CD4-positive, alpha-beta memory T cell (primary cell): ENCODE measurements at regions of chr6 and their contacts with region 1.

Region 1: GRCh38 chr6:25490018-25490801 is 161.8 kb upstream of the SCGN start:
- DNase-seq: peak; percentile 60 to 68 (median 63)
- H3K4me3 ChIP-seq: no peak overlapping the region
- H3K4me3 Mint-ChIP-seq: no peak overlapping the region
- H3K27ac ChIP-seq: no peak overlapping the region
- H3K27ac Mint-ChIP-seq: peak overlapping the region in 2 of 7 donors; percentile 62 to 79
- H3K4me1 ChIP-seq: no peaks in the 10 kb centered on the region
- H3K4me1 Mint-ChIP-seq: peaks cover 0 to 9% (median 3%) of the 10 kb centered on the region in 4 donors
- H3K27me3 ChIP-seq: no peaks in the 10 kb centered on the region
- H3K27me3 Mint-ChIP-seq: no peaks in the 10 kb centered on the region

Region 2: DNA sequence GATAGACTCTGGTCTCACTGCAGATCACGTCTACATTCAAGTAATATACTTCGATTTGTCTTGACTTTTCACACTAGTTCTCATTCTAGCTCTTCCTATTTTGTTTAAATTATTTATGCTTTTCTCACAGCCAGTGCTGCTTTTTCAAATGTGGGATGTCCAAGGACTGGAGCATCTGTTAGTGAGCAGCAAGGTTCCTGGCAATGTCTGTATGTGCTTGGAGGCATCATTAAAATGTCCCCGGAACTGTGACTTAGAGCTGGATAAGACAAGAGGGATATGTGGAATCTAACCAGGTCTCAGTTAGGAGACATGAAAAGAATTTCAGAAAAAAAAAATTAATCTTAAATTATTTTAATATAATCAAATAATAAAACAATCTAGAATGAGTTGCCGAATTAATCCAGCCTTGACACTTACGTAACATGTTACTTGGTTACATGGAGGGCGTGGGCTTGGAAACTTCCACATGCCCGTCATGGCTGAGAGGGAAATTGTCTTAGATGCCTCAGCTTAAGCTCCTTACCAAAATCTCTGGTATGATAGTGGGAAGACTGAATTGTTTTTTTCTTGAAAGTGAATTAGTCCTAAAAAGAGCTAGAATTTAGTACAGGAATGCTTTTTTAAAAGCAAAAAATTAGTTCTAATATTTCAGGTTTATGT is 232.4 kb before region 1 on chr6:
- CTCF ChIA-PET with region 1: interaction called, 202 read pairs
- POLR2A ChIA-PET with region 1: no interaction called
- intact Hi-C with region 1: no loop called
- DNase-seq: no peak
- H3K4me3 ChIP-seq: no peak overlapping the region
- H3K4me3 Mint-ChIP-seq: no peak overlapping the region
- H3K27ac ChIP-seq: no peak overlapping the region
- H3K27ac Mint-ChIP-seq: no peak overlapping the region
- H3K4me1 ChIP-seq: no peaks in the 10 kb centered on the region
- H3K4me1 Mint-ChIP-seq: no peaks in the 10 kb centered on the region
- H3K27me3 ChIP-seq: no peaks in the 10 kb centered on the region
- H3K27me3 Mint-ChIP-seq: peaks cover 5% of the 10 kb centered on the region in 2 donors

Region 3: GRCh38 chr6:25278914-25279747 is 211.1 kb before region 1 on chr6 and contains the start of gene CARMIL1:
- CTCF ChIA-PET with region 1: interaction called, 155 read pairs
- POLR2A ChIA-PET with region 1: interaction called, 11 read pairs
- intact Hi-C with region 1: loop called (anchors 1 kb)
- DNase-seq: peak; percentile 57 to 73 (median 63)
- H3K4me3 ChIP-seq: peak within 1 kb of the TSS; percentile 53 to 66
- H3K4me3 Mint-ChIP-seq: peak within 1 kb of the TSS; percentile 82 to 98 (median 93)
- H3K27ac ChIP-seq: peak within 1 kb of the TSS; percentile 42
- H3K27ac Mint-ChIP-seq: peak within 1 kb of the TSS; percentile 81 to 96 (median 90)
- H3K4me1 ChIP-seq: peaks cover 20% of the 10 kb centered on the region
- H3K4me1 Mint-ChIP-seq: peaks cover 21 to 44% (median 28%) of the 10 kb centered on the region in 4 donors
- H3K27me3 ChIP-seq: no peaks in the 10 kb centered on the region
- H3K27me3 Mint-ChIP-seq: peaks cover 0 to 8% of the 10 kb centered on the region in 2 donors
- total RNA-seq, gene CARMIL1: 3.5 TPM

Region 4: GRCh38 chr6:25369433-25370181 is 120.6 kb before region 1 on chr6:
- CTCF ChIA-PET with region 1: interaction called, 12 read pairs
- POLR2A ChIA-PET with region 1: no interaction called
- intact Hi-C with region 1: no loop called
- DNase-seq: peak in 1 of 5 donors; percentile 34
- H3K4me3 ChIP-seq: peak overlapping the region; percentile 5 to 32
- H3K4me3 Mint-ChIP-seq: peak overlapping the region; percentile 57 to 88 (median 74)
- H3K27ac ChIP-seq: peak overlapping the region; percentile 28
- H3K27ac Mint-ChIP-seq: peak overlapping the region; percentile 56 to 97 (median 81)
- H3K4me1 ChIP-seq: peaks cover 49% of the 10 kb centered on the region
- H3K4me1 Mint-ChIP-seq: peaks cover 44 to 91% (median 66%) of the 10 kb centered on the region in 4 donors
- H3K27me3 ChIP-seq: no peaks in the 10 kb centered on the region
- H3K27me3 Mint-ChIP-seq: no peaks in the 10 kb centered on the region

Region 5: GRCh38 chr6:25472306-25472705 is 17.9 kb before region 1 on chr6:
- CTCF ChIA-PET with region 1: interaction called, 21 read pairs
- POLR2A ChIA-PET with region 1: no interaction called
- intact Hi-C with region 1: no loop called
- DNase-seq: no peak
- H3K4me3 ChIP-seq: no peak overlapping the region
- H3K4me3 Mint-ChIP-seq: no peak overlapping the region
- H3K27ac ChIP-seq: no peak overlapping the region
- H3K27ac Mint-ChIP-seq: no peak overlapping the region
- H3K4me1 ChIP-seq: no peaks in the 10 kb centered on the region
- H3K4me1 Mint-ChIP-seq: no peaks in the 10 kb centered on the region
- H3K27me3 ChIP-seq: no peaks in the 10 kb centered on the region
- H3K27me3 Mint-ChIP-seq: no peaks in the 10 kb centered on the region